ENCODE measurements at regions of chr6 and their contacts with region 1.

Region 1: DNA sequence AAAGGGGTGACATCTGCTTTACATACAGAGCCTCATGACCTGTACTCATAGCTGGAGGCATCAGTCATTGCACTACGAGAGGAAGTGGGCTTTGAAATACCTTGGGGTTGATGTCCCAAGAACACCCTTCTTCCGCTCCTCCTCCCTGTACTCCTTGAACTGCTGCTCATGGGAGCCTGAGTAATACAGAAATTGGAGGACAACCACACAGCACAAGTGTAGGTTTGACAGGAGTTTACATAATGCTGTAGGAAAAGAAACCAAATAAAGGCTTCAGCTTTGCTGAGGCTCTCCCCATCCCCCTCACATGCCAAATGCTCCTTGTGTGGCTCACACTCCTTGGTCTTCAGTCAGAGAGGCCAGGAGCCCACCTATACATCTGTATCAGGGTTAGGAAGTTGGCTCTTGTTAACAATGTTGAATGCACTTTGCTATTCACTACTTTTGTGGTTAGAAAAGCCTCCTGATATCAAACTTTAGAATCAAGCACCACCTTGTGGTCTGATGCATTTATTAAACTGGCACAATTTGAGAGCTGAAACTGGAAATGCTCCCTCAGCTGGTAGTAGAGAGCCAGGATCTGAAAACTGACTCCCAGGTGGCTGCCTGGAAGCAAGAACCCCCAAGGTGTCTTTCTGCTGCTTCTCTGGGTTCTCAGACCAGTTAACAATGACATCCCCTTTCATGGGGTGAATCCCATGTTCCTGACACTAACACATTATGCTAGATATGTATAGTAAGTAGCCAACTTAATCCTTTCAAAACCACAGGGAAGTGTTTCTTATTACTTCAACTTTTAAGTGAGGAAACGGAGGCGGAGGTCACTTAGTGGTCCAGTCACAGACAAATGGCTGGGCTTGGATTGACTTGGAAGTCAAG is 56.2 kb upstream of the EDN1 start:
- DNase-seq: peak; percentile 86
- H3K4me3 ChIP-seq: no peak overlapping the region
- H3K27ac ChIP-seq: no peak overlapping the region
- H3K4me1 ChIP-seq: no peaks in the 10 kb centered on the region
- H3K27me3 ChIP-seq: no peaks in the 10 kb centered on the region
- CTCF ChIP-seq: peak; percentile 59 to 73
- POLR2A ChIP-seq: no peak

Region 2: DNA sequence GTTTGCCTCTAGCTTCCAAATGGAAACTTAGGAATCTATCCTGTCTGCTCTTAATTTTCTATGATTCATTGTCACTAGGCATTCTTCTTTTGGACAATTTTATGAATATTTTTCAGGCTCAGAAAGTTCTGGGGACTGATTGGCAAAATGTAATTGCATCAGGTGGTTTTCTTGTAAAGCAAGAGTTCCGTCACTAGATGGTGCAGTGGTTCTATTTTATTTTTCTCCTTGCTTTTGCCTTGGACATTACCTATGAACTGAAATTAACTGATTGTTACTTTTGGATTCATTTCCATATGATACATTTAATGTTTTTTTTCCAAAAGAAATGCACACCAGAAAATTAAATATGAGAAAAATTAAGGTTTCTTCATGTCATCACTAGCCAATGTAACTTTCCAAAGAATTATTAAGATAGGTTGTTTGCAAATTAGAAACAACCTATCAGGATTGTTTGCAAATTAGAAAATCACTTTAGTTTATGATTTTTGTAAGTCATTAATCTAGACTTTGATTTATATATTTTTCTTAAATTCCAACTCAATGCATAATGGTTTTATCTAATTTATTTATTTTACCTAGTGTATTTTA is 648.4 kb before region 1 on chr6:
- CTCF ChIA-PET with region 1: interaction called, 39 read pairs
- POLR2A ChIA-PET with region 1: no interaction called
- dilution Hi-C with region 1: no loop called
- intact Hi-C with region 1: loop called (anchors 1 kb)
- DNase-seq: peak; percentile 83
- H3K4me3 ChIP-seq: no peak overlapping the region
- H3K27ac ChIP-seq: peak overlapping the region; percentile 79
- H3K4me1 ChIP-seq: peaks cover 29% of the 10 kb centered on the region
- H3K27me3 ChIP-seq: no peaks in the 10 kb centered on the region
- CTCF ChIP-seq: peak; percentile 41 to 42
- POLR2A ChIP-seq: no peak

Region 3: DNA sequence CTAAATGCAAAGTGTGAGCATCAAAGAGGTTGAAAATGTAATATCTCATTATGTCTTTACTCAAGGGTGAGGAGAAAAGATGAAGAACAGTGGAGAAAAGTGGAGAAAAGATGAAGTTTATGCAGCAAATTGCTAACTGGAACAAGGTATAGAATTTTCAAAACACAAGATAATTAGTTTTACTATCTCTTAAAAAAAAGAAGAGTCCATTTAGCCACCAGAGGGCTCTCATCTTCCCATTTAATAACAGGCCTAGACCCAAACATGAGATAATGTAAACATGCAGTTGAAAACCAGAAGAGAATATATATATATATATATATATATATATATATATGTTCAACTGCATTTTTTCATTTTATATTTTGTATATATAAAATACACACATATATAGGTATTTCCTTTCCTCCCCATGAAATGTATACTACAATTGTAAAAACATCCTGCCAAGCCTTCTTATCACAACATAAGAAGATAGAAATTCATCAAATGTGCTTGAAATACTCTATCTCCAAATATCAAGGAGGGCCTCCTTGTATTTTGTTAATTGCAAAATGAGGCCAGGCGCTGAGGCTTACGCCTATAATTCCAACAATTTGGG is 533.7 kb before region 1 on chr6:
- CTCF ChIA-PET with region 1: interaction called, 7 read pairs
- POLR2A ChIA-PET with region 1: no interaction called
- dilution Hi-C with region 1: no loop called
- intact Hi-C with region 1: loop called (anchors 1 kb)
- DNase-seq: peak; percentile 47
- H3K4me3 ChIP-seq: no peak overlapping the region
- H3K27ac ChIP-seq: no peak overlapping the region
- H3K4me1 ChIP-seq: no peaks in the 10 kb centered on the region
- H3K27me3 ChIP-seq: no peaks in the 10 kb centered on the region
- CTCF ChIP-seq: peak in 1 of 2 donors; percentile 16
- POLR2A ChIP-seq: no peak

Region 4: DNA sequence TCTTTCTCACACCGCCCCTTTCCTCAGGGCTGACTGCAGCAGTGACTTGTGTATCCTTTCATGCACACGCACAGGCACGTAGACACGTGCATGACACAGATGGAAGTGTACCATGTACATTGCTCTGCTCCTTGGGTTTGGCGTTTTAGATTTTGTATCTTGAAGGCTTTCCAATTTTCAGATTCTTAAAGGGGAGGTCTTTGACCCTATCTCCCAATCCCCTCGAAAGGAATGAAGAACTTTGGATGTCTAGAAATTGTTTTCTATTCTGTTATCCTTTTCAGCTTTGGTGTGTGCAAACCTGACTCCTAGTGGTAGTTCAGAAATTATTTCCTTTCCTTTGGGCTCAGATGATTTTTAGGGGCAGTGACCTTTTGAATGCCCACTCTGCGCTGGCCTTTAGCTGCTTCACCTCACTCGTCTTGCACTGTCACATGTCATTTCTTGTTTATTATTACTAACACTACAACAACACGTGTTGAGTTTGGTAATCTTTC is 158.8 kb before region 1 on chr6:
- CTCF ChIA-PET with region 1: interaction called, 11 read pairs
- POLR2A ChIA-PET with region 1: no interaction called
- dilution Hi-C with region 1: no loop called
- intact Hi-C with region 1: no loop called
- DNase-seq: peak; percentile 34
- H3K4me3 ChIP-seq: no peak overlapping the region
- H3K27ac ChIP-seq: no peak overlapping the region
- H3K4me1 ChIP-seq: peaks cover 22% of the 10 kb centered on the region
- H3K27me3 ChIP-seq: no peaks in the 10 kb centered on the region
- CTCF ChIP-seq: peak; percentile 13 to 18
- POLR2A ChIP-seq: no peak

Region 5: GRCh38 chr6:12222405-12223366 is 11.2 kb before region 1 on chr6:
- CTCF ChIA-PET with region 1: interaction called, 10 read pairs
- POLR2A ChIA-PET with region 1: interaction called, 3 read pairs
- dilution Hi-C with region 1: no loop called
- intact Hi-C with region 1: no loop called
- DNase-seq: no peak
- H3K4me3 ChIP-seq: no peak overlapping the region
- H3K27ac ChIP-seq: no peak overlapping the region
- H3K4me1 ChIP-seq: no peaks in the 10 kb centered on the region
- H3K27me3 ChIP-seq: peaks cover 0 to 2% of the 10 kb centered on the region in 2 experiments
- CTCF ChIP-seq: no peak
- POLR2A ChIP-seq: no peak

Region 6: DNA sequence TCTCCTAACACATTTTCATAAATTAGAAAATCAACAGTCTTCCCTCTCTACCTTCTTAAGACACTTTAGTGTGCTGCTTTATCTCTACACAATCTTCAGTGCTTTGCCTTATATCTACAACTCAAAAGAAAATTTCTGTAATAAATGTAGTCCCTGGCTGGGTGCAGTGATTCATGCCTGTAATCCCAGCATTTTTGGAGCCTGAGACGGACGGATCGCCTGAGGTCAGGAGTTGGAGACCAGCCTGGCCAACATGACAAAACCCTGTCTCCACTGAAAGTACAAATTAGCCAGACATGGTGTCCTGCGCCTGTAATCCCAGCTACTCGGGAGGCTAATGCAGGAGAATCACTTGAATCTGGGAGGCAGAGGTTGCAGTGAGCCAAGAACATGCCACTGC is 46.5 kb after region 1 on chr6:
- CTCF ChIA-PET with region 1: interaction called, 31 read pairs
- POLR2A ChIA-PET with region 1: no interaction called
- dilution Hi-C with region 1: no loop called
- intact Hi-C with region 1: no loop called
- DNase-seq: no peak
- H3K4me3 ChIP-seq: no peak overlapping the region
- H3K27ac ChIP-seq: no peak overlapping the region
- H3K4me1 ChIP-seq: no peaks in the 10 kb centered on the region
- H3K27me3 ChIP-seq: no peaks in the 10 kb centered on the region
- CTCF ChIP-seq: no peak
- POLR2A ChIP-seq: no peak

Region 7: DNA sequence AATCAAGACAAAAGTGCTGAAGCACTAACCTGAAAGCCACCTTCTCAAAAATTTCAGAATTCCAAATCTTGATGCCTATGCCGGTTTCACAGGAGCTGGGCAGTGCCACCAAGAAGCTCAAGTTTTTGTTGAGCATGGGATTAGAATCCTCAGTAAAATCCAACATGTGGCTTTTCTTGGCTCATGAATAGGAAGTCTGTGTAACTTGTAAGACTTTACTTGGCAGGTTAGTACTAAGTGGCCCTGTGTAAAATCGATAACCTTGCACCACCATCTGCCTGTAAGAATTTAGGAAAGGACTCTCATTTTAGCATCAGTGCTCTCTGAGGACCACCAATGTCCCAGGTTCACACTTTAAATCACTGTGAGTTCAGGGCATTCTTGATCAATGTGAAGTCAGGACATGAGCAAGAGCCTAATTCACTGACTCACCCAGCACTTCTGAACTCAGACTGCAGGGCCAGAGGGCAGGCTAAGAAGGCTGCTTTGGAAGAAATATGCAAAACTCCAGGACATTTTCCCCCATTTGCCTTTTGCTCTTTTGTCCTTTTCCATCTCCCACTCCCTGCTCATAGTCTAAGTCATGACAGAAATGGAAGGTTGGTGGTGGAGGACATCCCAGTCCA is 169.4 kb after region 1 on chr6:
- CTCF ChIA-PET with region 1: no interaction called
- POLR2A ChIA-PET with region 1: no interaction called
- dilution Hi-C with region 1: no loop called
- intact Hi-C with region 1: no loop called
- DNase-seq: peak; percentile 63
- H3K4me3 ChIP-seq: no peak overlapping the region
- H3K27ac ChIP-seq: no peak overlapping the region
- H3K4me1 ChIP-seq: peaks cover 15% of the 10 kb centered on the region
- H3K27me3 ChIP-seq: no peaks in the 10 kb centered on the region
- CTCF ChIP-seq: no peak
- POLR2A ChIP-seq: no peak

Region 8: GRCh38 chr6:12679341-12679740 is 445.4 kb after region 1 on chr6:
- CTCF ChIA-PET with region 1: no interaction called
- POLR2A ChIA-PET with region 1: no interaction called
- dilution Hi-C with region 1: no loop called
- intact Hi-C with region 1: no loop called
- DNase-seq: no peak
- H3K4me3 ChIP-seq: no peak overlapping the region
- H3K27ac ChIP-seq: no peak overlapping the region
- H3K4me1 ChIP-seq: no peaks in the 10 kb centered on the region
- H3K27me3 ChIP-seq: peaks cover 3 to 4% of the 10 kb centered on the region in 2 experiments
- CTCF ChIP-seq: no peak
- POLR2A ChIP-seq: no peak

Region 9: DNA sequence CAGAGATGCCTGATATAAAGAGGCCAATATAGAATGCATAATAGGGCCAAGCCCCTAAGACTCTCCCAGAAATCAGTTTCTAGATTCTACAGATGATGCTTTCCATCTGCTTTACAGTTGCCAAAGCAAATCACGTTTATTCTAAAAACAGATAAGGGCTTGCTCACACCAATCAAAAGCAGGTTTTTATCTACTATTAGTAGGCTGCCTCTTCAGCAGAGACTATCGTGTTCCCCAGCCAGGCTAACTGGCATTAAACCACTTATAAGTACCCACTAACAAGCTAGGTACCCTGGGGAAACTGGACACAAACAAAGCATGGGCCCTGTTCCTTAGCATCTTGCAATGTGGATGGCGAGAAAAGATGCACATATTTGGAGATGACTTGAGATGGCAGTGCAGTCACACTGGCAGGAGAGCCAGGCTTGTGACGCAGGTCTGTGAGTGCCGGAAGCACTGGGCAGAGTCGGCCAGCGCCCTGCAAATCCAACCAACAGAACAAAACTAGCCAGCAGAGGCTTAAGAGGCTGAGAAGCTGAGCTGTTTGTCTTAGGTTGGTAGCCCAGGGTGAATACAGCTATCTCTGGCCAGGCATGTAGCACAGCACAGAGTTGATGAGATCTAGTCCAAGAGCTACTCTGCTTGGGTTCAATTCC is 1180.1 kb after region 1 on chr6:
- CTCF ChIA-PET with region 1: no interaction called
- POLR2A ChIA-PET with region 1: no interaction called
- dilution Hi-C with region 1: no loop called
- intact Hi-C with region 1: no loop called
- DNase-seq: no peak
- H3K4me3 ChIP-seq: no peak overlapping the region
- H3K27ac ChIP-seq: no peak overlapping the region
- H3K4me1 ChIP-seq: peaks cover 4% of the 10 kb centered on the region
- H3K27me3 ChIP-seq: no peaks in the 10 kb centered on the region
- CTCF ChIP-seq: no peak
- POLR2A ChIP-seq: no peak